MCF 10A (cell line): ENCODE measurements at regions of chr2 and their contacts with region 1.

Region 1: GRCh38 chr2:98188351-98189049 is 101.5 kb downstream of the VWA3B start:
- DNase-seq: peak; percentile 44
- H3K4me3 Mint-ChIP-seq: no peak overlapping the region
- H3K27ac Mint-ChIP-seq: no peak overlapping the region
- H3K4me1 Mint-ChIP-seq: no peaks in the 10 kb centered on the region
- H3K27me3 Mint-ChIP-seq: no peaks in the 10 kb centered on the region
- CTCF ChIP-seq: peak; percentile 32

Region 2: GRCh38 chr2:98172951-98173350 is 15.5 kb before region 1 on chr2:
- CTCF ChIA-PET with region 1: interaction called, 14 read pairs
- POLR2A ChIA-PET with region 1: interaction called, 9 read pairs
- intact Hi-C with region 1: no loop called
- DNase-seq: no peak
- H3K4me3 Mint-ChIP-seq: no peak overlapping the region
- H3K27ac Mint-ChIP-seq: no peak overlapping the region
- H3K4me1 Mint-ChIP-seq: no peaks in the 10 kb centered on the region
- H3K27me3 Mint-ChIP-seq: peaks cover 32% of the 10 kb centered on the region
- CTCF ChIP-seq: no peak

Region 3: GRCh38 chr2:98177986-98178385 is 10.5 kb before region 1 on chr2:
- CTCF ChIA-PET with region 1: interaction called, 14 read pairs
- POLR2A ChIA-PET with region 1: interaction called, 9 read pairs
- intact Hi-C with region 1: no loop called
- DNase-seq: no peak
- H3K4me3 Mint-ChIP-seq: no peak overlapping the region
- H3K27ac Mint-ChIP-seq: no peak overlapping the region
- H3K4me1 Mint-ChIP-seq: peaks cover 18% of the 10 kb centered on the region
- H3K27me3 Mint-ChIP-seq: peaks cover 33% of the 10 kb centered on the region
- CTCF ChIP-seq: no peak

Region 4: GRCh38 chr2:98343285-98343684 is 154.8 kb after region 1 on chr2:
- CTCF ChIA-PET with region 1: no interaction called
- POLR2A ChIA-PET with region 1: no interaction called
- intact Hi-C with region 1: no loop called
- DNase-seq: no peak
- H3K4me3 Mint-ChIP-seq: no peak overlapping the region
- H3K27ac Mint-ChIP-seq: no peak overlapping the region
- H3K4me1 Mint-ChIP-seq: no peaks in the 10 kb centered on the region
- H3K27me3 Mint-ChIP-seq: peaks cover 25% of the 10 kb centered on the region
- CTCF ChIP-seq: no peak